Posterior vena cava (tissue), 2 donors: ENCODE measurements at regions of chr3 and their contacts with region 1.

Region 1: GRCh38 chr3:54339608-54340007 is 217.3 kb downstream of the CACNA2D3 start:
- DNase-seq: no peak

Region 2: GRCh38 chr3:53748512-53749271 is 590.9 kb before region 1 on chr3:
- intact Hi-C with region 1: loop called in 1 of 2 experiments (anchors 10 kb)
- DNase-seq: peak; percentile 53